ENCODE measurements at regions of chrX and their contacts with region 1.

Region 1: DNA sequence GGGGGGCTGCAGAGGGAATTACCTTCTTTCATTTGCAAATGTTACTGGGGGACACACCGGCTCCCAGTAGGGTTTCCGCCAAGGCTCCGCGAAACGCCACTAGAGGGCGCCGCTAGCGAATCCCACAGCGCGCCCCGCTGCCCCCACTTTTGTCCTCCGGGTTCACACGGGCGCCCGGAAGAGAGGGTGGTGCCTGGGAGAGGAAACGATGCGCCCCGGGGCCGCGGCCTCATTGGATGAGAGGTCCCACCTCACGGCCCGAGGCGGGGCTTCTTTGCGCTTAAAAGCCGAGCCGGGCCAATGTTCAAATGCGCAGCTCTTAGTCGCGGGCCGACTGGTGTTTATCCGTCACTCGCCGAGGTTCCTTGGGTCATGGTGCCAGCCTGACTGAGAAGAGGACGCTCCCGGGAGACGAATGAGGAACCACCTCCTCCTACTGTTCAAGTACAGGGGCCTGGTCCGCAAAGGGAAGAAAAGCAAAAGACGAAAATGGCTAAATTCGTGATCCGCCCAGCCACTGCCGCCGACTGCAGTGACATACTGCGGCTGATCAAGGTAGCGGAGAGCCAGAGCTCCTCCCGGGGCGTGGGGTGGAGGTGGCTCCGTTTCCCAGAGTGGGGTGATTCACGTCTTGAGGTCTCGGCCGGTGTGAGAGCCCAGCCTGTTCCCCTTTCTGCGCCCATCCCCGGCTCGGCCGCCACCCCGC is at the start of gene SAT1:
- DNase-seq: peak; percentile 95
- H3K4me3 Mint-ChIP-seq: peak within 1 kb of the TSS; percentile 90
- H3K27ac Mint-ChIP-seq: peak within 1 kb of the TSS; percentile 97
- H3K4me1 Mint-ChIP-seq: peaks cover 33% of the 10 kb centered on the region
- H3K27me3 Mint-ChIP-seq: no peaks in the 10 kb centered on the region
- total RNA-seq, gene SAT1: 205 to 218 TPM

Region 2: DNA sequence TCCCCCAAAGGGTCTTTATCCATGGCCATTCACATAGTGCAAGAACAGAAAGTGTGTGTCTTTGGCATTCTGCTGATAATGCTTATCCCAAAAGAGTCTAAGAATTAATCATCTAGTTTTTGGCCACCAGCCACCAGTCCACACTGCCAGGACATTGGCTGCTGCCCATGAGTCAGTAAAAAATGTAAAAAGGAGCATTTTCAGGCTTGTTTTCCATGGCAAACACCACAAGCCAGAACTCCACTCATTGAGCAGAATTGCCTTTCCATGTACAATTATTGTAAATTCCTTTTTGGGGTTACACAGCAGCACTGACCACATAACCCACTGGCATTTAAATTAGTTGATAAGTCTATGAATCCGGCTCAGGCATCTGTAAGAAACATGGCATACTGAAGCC is 204.9 kb before region 1 on chrX:
- CTCF ChIA-PET with region 1: no interaction called
- POLR2A ChIA-PET with region 1: no interaction called
- DNase-seq: no peak
- H3K4me3 Mint-ChIP-seq: no peak overlapping the region
- H3K27ac Mint-ChIP-seq: no peak overlapping the region
- H3K4me1 Mint-ChIP-seq: no peaks in the 10 kb centered on the region
- H3K27me3 Mint-ChIP-seq: no peaks in the 10 kb centered on the region

Region 3: GRCh38 chrX:23732704-23733103 is 50.3 kb before region 1 on chrX:
- CTCF ChIA-PET with region 1: interaction called, 4 read pairs
- POLR2A ChIA-PET with region 1: interaction called, 13 read pairs
- DNase-seq: no peak
- H3K4me3 Mint-ChIP-seq: peak overlapping the region; percentile 33
- H3K27ac Mint-ChIP-seq: peak overlapping the region; percentile 86
- H3K4me1 Mint-ChIP-seq: peaks cover 24% of the 10 kb centered on the region
- H3K27me3 Mint-ChIP-seq: no peaks in the 10 kb centered on the region

Region 4: GRCh38 chrX:23826653-23827052 is 43.6 kb after region 1 on chrX:
- CTCF ChIA-PET with region 1: no interaction called
- POLR2A ChIA-PET with region 1: no interaction called
- DNase-seq: no peak
- H3K4me3 Mint-ChIP-seq: no peak overlapping the region
- H3K27ac Mint-ChIP-seq: no peak overlapping the region
- H3K4me1 Mint-ChIP-seq: no peaks in the 10 kb centered on the region
- H3K27me3 Mint-ChIP-seq: no peaks in the 10 kb centered on the region

Region 5: DNA sequence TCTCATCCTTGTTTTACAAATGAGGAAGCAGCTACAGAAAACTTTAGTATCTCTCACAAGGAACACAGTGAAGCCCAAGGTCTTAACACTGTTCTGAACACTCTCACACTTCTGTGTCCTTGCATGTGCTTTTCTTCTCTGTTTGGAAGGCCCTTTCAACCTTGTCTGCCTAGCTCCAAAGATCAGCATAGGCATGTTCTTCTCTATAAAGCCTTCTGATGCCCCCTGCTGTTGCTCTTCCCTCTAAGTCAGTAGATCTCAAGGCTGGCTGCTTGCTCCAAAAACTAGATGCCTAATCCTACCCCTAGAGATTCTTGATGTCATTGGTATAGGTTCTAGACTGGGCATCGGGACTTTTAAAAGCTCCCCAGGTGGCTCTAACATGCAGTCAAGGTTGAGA is 118.8 kb after region 1 on chrX:
- CTCF ChIA-PET with region 1: interaction called, 80 read pairs
- POLR2A ChIA-PET with region 1: interaction called, 44 read pairs
- DNase-seq: peak; percentile 48
- H3K4me3 Mint-ChIP-seq: no peak overlapping the region
- H3K27ac Mint-ChIP-seq: no peak overlapping the region
- H3K4me1 Mint-ChIP-seq: peaks cover 26% of the 10 kb centered on the region
- H3K27me3 Mint-ChIP-seq: no peaks in the 10 kb centered on the region

Region 6: GRCh38 chrX:24024819-24025740 is 242.1 kb after region 1 on chrX:
- CTCF ChIA-PET with region 1: interaction called, 3 read pairs
- POLR2A ChIA-PET with region 1: interaction called, 33 read pairs
- DNase-seq: peak; percentile 86
- H3K4me3 Mint-ChIP-seq: peak overlapping the region; percentile 88
- H3K27ac Mint-ChIP-seq: peak overlapping the region; percentile 87
- H3K4me1 Mint-ChIP-seq: peaks cover 27% of the 10 kb centered on the region
- H3K27me3 Mint-ChIP-seq: no peaks in the 10 kb centered on the region

Measured in activated CD4-positive, alpha-beta memory T cell treated with anti-CD3 and anti-CD28 coated beads, Interleukin-2, amount 10 ng/mL, durations not matched to agents 7 days and 5 days (primary cell).